Gastrocnemius medialis (tissue), 4 donors: ENCODE measurements at regions of chr3 and their contacts with region 1.

Region 1: DNA sequence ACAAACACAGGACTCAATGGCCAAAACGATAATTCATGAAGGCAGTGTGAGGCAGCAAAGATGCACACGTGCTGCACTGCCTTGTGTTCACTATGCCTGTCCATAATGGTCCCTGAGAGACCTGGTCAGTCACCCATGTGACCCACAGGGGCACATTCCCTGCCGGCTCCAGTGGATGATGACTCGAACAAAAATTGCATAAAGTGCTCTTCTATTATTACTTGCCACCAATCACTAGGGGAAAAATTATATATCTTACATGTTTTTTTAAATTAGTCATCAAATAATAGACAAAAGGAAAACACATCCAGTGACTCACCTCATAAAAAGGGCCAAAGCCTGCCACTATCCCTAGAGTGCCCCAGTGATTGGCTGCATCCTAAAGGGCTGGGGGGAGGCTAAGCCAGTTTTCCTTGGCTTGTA is 47.5 kb downstream of the UBP1 start:
- DNase-seq: no peak
- ATAC-seq: no peak
- H3K4me3 ChIP-seq: no peak overlapping the region
- H3K27ac ChIP-seq: no peak overlapping the region
- H3K4me1 ChIP-seq: no peaks in the 10 kb centered on the region
- H3K27me3 ChIP-seq: no peaks in the 10 kb centered on the region
- CTCF ChIP-seq: no peak
- POLR2A ChIP-seq: no peak

Region 2: DNA sequence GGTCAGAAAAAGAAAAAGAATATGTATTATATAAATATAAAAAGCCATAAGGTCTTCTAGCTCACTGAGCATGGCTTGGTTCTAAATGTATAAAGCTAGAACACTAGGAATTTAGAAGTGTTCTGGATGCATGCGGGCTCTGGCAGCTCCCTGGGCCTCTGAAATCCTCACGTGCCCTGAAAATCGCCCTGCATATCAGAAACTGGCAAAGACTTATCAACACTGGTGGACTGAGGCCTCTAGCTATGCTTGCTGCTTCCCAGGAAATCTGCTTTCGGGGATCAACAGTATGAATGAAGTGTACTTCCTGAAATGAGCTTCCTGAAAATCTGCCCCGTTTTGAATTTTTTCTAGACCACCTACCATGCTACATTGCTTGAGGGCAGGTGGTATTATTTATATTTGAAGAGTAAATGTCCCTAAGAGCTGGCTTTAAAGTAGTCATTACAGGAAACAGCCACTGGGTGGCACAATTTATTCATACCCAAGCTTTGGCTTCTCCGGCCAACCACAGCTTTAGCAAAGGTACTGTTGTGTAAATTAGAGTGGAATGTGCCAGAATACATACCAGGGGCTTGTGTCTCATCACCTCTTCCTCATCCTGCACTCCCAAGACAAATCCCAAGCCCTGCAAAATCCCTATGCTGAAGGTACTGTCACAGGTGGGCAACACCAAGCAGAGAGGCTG is 261.2 kb before region 1 on chr3:
- in situ Hi-C with region 1: loop called in 1 of 4 experiments (anchors 25 kb)
- intact Hi-C with region 1: no loop called
- DNase-seq: no peak
- ATAC-seq: peak; percentile 66 to 89
- H3K4me3 ChIP-seq: no peak overlapping the region
- H3K27ac ChIP-seq: no peak overlapping the region
- H3K4me1 ChIP-seq: no peaks in the 10 kb centered on the region
- H3K27me3 ChIP-seq: no peaks in the 10 kb centered on the region
- CTCF ChIP-seq: peak; percentile 44 to 80 (median 61)
- POLR2A ChIP-seq: no peak

Region 3: DNA sequence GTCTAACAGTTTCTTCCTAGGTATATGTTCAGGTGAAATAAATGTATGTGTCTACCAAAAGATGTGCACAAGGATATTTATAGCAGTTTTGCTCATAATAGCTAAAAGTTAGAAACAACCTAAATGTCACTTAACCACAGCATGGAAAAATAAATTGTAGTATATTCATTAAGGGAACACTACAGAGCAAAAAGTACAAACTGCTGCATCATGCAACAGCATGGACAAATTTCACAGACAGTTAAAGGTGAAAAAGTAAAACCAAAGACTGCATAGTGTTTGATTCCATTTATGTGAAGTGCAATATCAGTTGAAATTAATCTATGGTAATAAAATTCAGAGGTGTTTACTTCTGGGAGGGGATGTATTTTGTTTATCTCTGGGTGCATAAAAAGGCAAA is 53.0 kb before region 1 on chr3:
- in situ Hi-C with region 1: no loop called
- intact Hi-C with region 1: no loop called
- DNase-seq: no peak
- ATAC-seq: no peak
- H3K4me3 ChIP-seq: no peak overlapping the region
- H3K27ac ChIP-seq: no peak overlapping the region
- H3K4me1 ChIP-seq: no peaks in the 10 kb centered on the region
- H3K27me3 ChIP-seq: no peaks in the 10 kb centered on the region
- CTCF ChIP-seq: no peak
- POLR2A ChIP-seq: no peak

Region 4: DNA sequence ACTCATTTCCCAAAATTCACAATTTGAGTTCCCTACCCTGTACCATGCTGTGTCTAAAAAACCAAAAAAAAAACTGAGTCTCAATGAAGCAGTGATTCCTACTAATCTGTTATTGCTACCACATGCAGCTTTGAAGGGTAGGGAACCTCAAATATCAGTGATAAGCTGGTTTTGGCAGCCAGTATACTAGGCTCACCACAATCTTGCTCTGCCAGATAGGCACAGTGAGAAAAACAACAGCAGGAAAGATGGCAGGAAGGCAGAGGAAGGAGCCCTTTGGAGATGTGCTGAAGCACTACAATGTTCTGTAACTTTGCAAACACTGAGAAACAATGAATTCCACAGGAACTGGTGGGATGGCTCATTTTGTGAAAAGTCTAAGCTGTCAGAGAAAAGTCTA is 144.4 kb after region 1 on chr3:
- in situ Hi-C with region 1: no loop called
- intact Hi-C with region 1: loop called (anchors 10 kb)
- DNase-seq: no peak
- ATAC-seq: no peak
- H3K4me3 ChIP-seq: no peak overlapping the region
- H3K27ac ChIP-seq: no peak overlapping the region
- H3K4me1 ChIP-seq: no peaks in the 10 kb centered on the region
- H3K27me3 ChIP-seq: no peaks in the 10 kb centered on the region
- CTCF ChIP-seq: no peak
- POLR2A ChIP-seq: no peak